A549 (cell line): ENCODE measurements at regions of chr7 and their contacts with region 1.

Region 1: DNA sequence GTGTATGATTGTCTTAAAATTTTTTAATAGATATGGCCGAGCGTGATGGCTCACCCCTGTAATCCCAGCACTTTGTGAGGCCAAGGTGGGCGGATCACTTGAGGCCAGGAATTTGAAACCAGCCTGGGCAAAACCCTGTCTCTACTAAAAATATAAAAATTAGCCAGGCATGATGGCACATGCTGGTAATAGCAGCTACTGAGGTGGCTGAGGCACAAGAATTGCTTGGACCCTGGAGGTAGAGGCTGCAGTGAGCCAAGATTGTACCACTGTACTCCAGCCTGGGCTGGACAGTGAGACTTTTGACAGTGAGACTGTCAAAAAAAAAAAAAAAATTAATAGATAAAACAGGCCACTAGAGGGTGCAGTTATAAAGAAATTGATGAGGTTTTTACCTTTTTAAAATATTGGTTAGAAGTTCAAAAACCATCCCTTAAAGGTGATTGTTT is 20.5 kb downstream of the NOM1 start:
- DNase-seq: no peak
- ATAC-seq: peak in 1 of 2 experiments; percentile 79; a peak in 3 of 6 replicates
- H3K4me3 ChIP-seq: no peak overlapping the region
- H3K27ac ChIP-seq: no peak overlapping the region
- H3K4me1 ChIP-seq: no peaks in the 10 kb centered on the region
- CTCF ChIP-seq: peak; percentile 60
- EP300 ChIP-seq: no peak
- POLR2A ChIP-seq: no peak
- RAD21 ChIP-seq: peak; percentile 48 to 54; a peak in 4 of 5 replicates

Region 2: GRCh38 chr7:156956727-156957126 is 13.3 kb before region 1 on chr7:
- CTCF ChIA-PET with region 1: interaction called, 42 read pairs
- POLR2A ChIA-PET with region 1: no interaction called
- DNase-seq: no peak
- ATAC-seq: no peak
- H3K4me3 ChIP-seq: no peak overlapping the region
- H3K27ac ChIP-seq: no peak overlapping the region
- H3K4me1 ChIP-seq: peaks cover 5% of the 10 kb centered on the region; the same call in 1 of the 3 replicates
- CTCF ChIP-seq: no peak
- EP300 ChIP-seq: no peak
- POLR2A ChIP-seq: no peak
- RAD21 ChIP-seq: no peak

Region 3: GRCh38 chr7:156984174-156984891 is 14.3 kb after region 1 on chr7:
- CTCF ChIA-PET with region 1: interaction called, 18 read pairs
- POLR2A ChIA-PET with region 1: no interaction called
- DNase-seq: no peak
- ATAC-seq: no peak
- H3K4me3 ChIP-seq: no peak overlapping the region
- H3K27ac ChIP-seq: no peak overlapping the region
- H3K4me1 ChIP-seq: no peaks in the 10 kb centered on the region
- CTCF ChIP-seq: no peak
- EP300 ChIP-seq: no peak
- POLR2A ChIP-seq: no peak
- RAD21 ChIP-seq: no peak

Region 4: GRCh38 chr7:157136372-157136771 is 166.4 kb after region 1 on chr7:
- CTCF ChIA-PET with region 1: interaction called, 10 read pairs
- POLR2A ChIA-PET with region 1: no interaction called
- DNase-seq: peak; percentile 49 to 76
- ATAC-seq: peak; percentile 8 to 14; a peak in 3 of 6 replicates
- H3K4me3 ChIP-seq: no peak overlapping the region
- H3K27ac ChIP-seq: peak overlapping the region; percentile 51 to 74; a peak in 5 of 6 replicates
- H3K4me1 ChIP-seq: peaks cover 24% of the 10 kb centered on the region
- CTCF ChIP-seq: peak; percentile 17; the same call in 1 of the 3 replicates
- EP300 ChIP-seq: no peak
- POLR2A ChIP-seq: no peak
- RAD21 ChIP-seq: peak; percentile 24 to 26; a peak in 2 of 5 replicates